ENCODE measurements at regions of chr19 and their contacts with region 1.

Region 1: DNA sequence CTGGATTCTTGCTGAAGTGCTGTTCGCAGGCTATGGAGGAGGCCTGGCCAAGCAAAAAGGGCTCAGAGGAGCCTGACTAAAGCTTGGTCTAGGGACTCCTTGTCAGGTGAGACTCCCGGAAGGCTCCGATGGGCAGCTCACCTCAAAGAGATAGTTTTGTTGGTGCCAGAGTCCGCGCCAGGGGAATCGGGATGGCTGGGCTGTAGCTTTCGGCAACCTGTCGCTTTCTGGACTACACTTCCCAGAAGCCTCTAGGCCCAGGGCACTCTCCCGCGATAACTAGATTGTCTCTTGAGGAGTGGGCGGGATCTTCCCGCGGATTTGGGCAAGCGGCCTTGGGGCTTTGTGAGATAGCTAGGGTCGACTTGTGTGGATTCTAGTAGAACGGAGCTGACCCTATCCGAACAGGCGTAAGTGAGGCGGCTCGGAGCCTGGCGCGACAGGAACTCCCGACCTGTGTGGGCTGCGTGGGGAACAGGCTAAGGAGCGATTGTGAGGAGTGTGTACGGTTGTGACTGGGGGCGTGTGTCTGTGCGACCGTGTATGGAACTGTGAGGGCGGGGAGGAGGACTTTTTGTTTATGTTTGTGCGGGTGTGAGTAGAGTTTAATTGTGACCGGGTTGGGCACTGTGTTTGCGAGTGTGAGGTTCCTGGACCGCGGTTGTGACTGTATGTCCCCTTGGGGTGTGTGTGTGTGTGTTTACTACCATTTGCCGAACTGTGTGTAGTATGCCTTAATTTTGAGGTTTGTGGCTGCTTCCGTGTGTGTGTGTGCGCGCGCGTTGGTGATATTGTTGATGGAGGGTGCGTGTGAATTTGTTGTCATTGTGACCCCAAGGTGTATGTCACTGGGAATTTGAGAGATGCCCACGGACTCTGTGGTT is at the start of gene ZNF345:
- DNase-seq: peak; percentile 81
- H3K4me3 Mint-ChIP-seq: no peak within 1 kb of the TSS
- H3K27ac Mint-ChIP-seq: no peak within 1 kb of the TSS
- H3K4me1 Mint-ChIP-seq: peaks cover 6% of the 10 kb centered on the region
- H3K27me3 Mint-ChIP-seq: no peaks in the 10 kb centered on the region
- total RNA-seq, gene ZNF345: 3.7 and 4.4 TPM in 2 replicates

Region 2: DNA sequence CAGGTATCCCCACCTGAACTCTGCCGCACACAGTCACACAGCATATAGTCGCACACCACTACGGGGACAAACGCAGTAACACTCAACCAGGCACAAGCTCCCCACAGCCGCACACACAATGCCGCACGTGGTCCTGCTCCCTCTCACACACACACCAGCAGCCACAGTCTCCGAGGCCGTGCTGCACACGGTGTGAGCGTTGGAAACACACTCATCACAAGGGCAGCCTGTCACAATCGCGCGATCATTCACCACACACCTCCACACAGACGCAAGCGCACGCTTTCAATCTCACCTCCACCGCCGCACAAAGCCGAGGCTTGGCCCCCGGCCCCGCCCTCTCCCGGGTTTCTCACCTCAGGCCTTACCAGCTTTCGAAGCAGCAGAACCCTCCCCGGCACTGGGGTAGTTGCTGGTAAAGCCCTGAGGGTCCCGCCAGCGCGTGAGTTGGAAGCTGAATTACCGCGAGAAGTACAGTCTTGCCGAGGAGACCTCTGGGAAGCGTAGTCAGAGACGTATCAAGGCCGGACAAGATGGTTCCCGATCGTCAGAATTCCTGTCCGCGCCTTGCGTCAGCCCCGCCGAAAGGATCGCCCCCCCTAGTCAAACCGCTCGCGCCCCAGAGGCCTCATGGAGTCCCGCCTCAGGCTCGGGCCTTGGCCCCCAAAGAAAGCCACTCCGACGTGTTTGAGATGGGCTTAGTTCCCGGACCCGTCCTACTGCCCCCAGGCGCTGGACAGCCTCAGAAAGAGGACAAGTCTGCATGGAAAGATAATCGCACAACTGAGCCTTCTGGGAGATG is 361.5 kb before region 1 on chr19 and contains the start of gene ZNF566:
- intact Hi-C with region 1: loop called (anchors 1 kb)
- DNase-seq: peak; percentile 88
- H3K4me3 Mint-ChIP-seq: peak within 1 kb of the TSS; percentile 96
- H3K27ac Mint-ChIP-seq: peak within 1 kb of the TSS; percentile 97
- H3K4me1 Mint-ChIP-seq: peaks cover 18% of the 10 kb centered on the region
- H3K27me3 Mint-ChIP-seq: no peaks in the 10 kb centered on the region
- total RNA-seq, gene ZNF566: 6.9 and 8.7 TPM in 2 replicates

Region 3: GRCh38 chr19:36665832-36666231 is 185.0 kb before region 1 on chr19:
- intact Hi-C with region 1: loop called (anchors 1 kb)
- DNase-seq: no peak
- H3K4me3 Mint-ChIP-seq: peak overlapping the region; percentile 99
- H3K27ac Mint-ChIP-seq: peak overlapping the region; percentile 26
- H3K4me1 Mint-ChIP-seq: peaks cover 16% of the 10 kb centered on the region
- H3K27me3 Mint-ChIP-seq: no peaks in the 10 kb centered on the region

Region 4: DNA sequence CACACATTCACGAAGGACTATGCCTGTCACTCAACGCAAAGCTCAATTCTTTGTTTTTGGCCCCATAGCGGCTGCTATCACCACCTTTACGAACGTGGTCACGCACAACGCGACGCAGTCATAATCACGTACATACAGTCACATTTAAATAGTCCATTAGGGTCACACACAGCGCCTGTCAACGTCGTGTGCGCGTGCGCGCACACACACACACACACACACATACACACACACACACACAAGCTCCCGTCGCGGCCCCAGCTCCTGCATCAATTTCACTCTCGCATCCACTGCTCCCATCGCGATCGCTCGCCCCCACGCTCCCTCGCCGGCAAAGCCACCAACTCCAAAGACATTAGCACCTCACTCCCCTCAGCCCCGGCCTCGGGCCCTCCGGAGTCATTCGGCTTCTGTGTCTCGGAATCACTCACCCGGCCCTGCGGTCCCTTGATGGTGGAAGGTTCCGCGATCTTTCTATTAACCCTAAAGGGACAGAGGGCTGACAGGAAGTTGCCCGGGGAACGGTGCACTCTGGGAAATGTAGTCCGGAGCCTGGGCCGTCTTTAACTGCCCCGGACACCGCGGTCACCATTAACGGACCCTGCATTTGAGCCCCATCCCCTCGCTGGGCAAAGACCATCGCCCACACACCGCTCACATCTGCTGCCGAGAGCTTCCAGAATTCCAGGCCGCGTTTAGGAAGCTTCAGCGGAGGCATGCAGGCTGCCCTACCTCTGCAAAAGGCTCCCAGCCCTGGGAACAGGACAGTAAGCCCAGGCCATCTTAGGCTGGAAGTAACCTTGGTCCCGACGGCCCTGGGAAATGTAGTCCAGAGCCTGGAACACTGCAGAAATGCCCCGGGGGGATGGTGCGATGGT is 12.7 kb before region 1 on chr19 and contains the start of gene ZNF790:
- intact Hi-C with region 1: loop called (anchors 1 kb)
- DNase-seq: peak; percentile 81
- H3K4me3 Mint-ChIP-seq: no peak within 1 kb of the TSS
- H3K27ac Mint-ChIP-seq: no peak within 1 kb of the TSS
- H3K4me1 Mint-ChIP-seq: no peaks in the 10 kb centered on the region
- H3K27me3 Mint-ChIP-seq: no peaks in the 10 kb centered on the region
- total RNA-seq, gene ZNF790: 4.4 and 4.5 TPM in 2 replicates

Region 5: GRCh38 chr19:37172368-37173366 is 321.9 kb after region 1 on chr19 and contains the start of gene ZNF585A:
- intact Hi-C with region 1: loop called (anchors 1 kb)
- DNase-seq: peak; percentile 74
- H3K4me3 Mint-ChIP-seq: no peak within 1 kb of the TSS
- H3K27ac Mint-ChIP-seq: no peak within 1 kb of the TSS
- H3K4me1 Mint-ChIP-seq: no peaks in the 10 kb centered on the region
- H3K27me3 Mint-ChIP-seq: no peaks in the 10 kb centered on the region
- total RNA-seq, gene ZNF585A: 1.2 and 2.6 TPM in 2 replicates

Region 6: GRCh38 chr19:37594304-37594981 is 743.6 kb after region 1 on chr19 and contains the starts of genes ZNF540 and ZNF571:
- intact Hi-C with region 1: loop called (anchors 5 kb)
- DNase-seq: peak; percentile 81
- H3K4me3 Mint-ChIP-seq: peak within 1 kb of the TSS; percentile 88
- H3K27ac Mint-ChIP-seq: peak within 1 kb of the TSS; percentile 91
- H3K4me1 Mint-ChIP-seq: peaks cover 24% of the 10 kb centered on the region
- H3K27me3 Mint-ChIP-seq: no peaks in the 10 kb centered on the region
- total RNA-seq, gene ZNF540: 0.39 and 0.70 TPM in 2 replicates
- total RNA-seq, gene ZNF571: 0.64 and 1.4 TPM in 2 replicates

Measured in activated T-helper 1 cell treated with anti-CD3 and anti-CD28 coated beads, Interleukin-12 subunit alpha, Interleukin-12 subunit beta, Interleukin-2, Interleukin-4 antibody, amounts not matched to agents 30 ng/mL and 10 ng/mL and 1 ng/mL, durations not matched to agents 14 hours and 24 hours and 36 hours (primary cell).